CD4-positive, alpha-beta memory T cell (primary cell): ENCODE measurements at regions of chr17 and their contacts with region 1.

Region 1: GRCh38 chr17:65794572-65794971 is 233.1 kb upstream of the AXIN2 start:
- DNase-seq: peak in 4 of 5 donors; percentile 11 to 18 (median 13)
- H3K4me3 ChIP-seq: no peak overlapping the region
- H3K4me3 Mint-ChIP-seq: no peak overlapping the region
- H3K27ac ChIP-seq: no peak overlapping the region
- H3K27ac Mint-ChIP-seq: no peak overlapping the region
- H3K4me1 ChIP-seq: no peaks in the 10 kb centered on the region
- H3K4me1 Mint-ChIP-seq: no peaks in the 10 kb centered on the region
- H3K27me3 ChIP-seq: no peaks in the 10 kb centered on the region
- H3K27me3 Mint-ChIP-seq: no peaks in the 10 kb centered on the region

Region 2: GRCh38 chr17:65294179-65294720 is 500.3 kb before region 1 on chr17:
- CTCF ChIA-PET with region 1: interaction called, 69 read pairs
- POLR2A ChIA-PET with region 1: no interaction called
- intact Hi-C with region 1: loop called (anchors 1 kb)
- DNase-seq: peak; percentile 49 to 61 (median 55)
- H3K4me3 ChIP-seq: no peak overlapping the region
- H3K4me3 Mint-ChIP-seq: no peak overlapping the region
- H3K27ac ChIP-seq: no peak overlapping the region
- H3K27ac Mint-ChIP-seq: peak overlapping the region in 1 of 7 donors; percentile 7
- H3K4me1 ChIP-seq: no peaks in the 10 kb centered on the region
- H3K4me1 Mint-ChIP-seq: peaks cover 0 to 6% (median 4%) of the 10 kb centered on the region in 4 donors
- H3K27me3 ChIP-seq: no peaks in the 10 kb centered on the region
- H3K27me3 Mint-ChIP-seq: peaks cover 0 to 2% of the 10 kb centered on the region in 2 donors

Region 3: GRCh38 chr17:65455972-65456343 is 338.6 kb before region 1 on chr17:
- CTCF ChIA-PET with region 1: interaction called, 3 read pairs
- POLR2A ChIA-PET with region 1: no interaction called
- intact Hi-C with region 1: loop called (anchors 10 kb)
- DNase-seq: peak in 4 of 5 donors; percentile 26 to 40 (median 28)
- H3K4me3 ChIP-seq: no peak overlapping the region
- H3K4me3 Mint-ChIP-seq: peak overlapping the region in 1 of 8 donors; percentile 4
- H3K27ac ChIP-seq: no peak overlapping the region
- H3K27ac Mint-ChIP-seq: peak overlapping the region in 2 of 7 donors; percentile 10 to 42
- H3K4me1 ChIP-seq: peaks cover 3% of the 10 kb centered on the region
- H3K4me1 Mint-ChIP-seq: peaks cover 0 to 6% (median 2%) of the 10 kb centered on the region in 4 donors
- H3K27me3 ChIP-seq: no peaks in the 10 kb centered on the region
- H3K27me3 Mint-ChIP-seq: no peaks in the 10 kb centered on the region

Region 4: GRCh38 chr17:65813306-65813705 is 18.7 kb after region 1 on chr17:
- CTCF ChIA-PET with region 1: no interaction called
- POLR2A ChIA-PET with region 1: no interaction called
- intact Hi-C with region 1: no loop called
- DNase-seq: no peak
- H3K4me3 ChIP-seq: no peak overlapping the region
- H3K4me3 Mint-ChIP-seq: no peak overlapping the region
- H3K27ac ChIP-seq: no peak overlapping the region
- H3K27ac Mint-ChIP-seq: no peak overlapping the region
- H3K4me1 ChIP-seq: no peaks in the 10 kb centered on the region
- H3K4me1 Mint-ChIP-seq: no peaks in the 10 kb centered on the region
- H3K27me3 ChIP-seq: no peaks in the 10 kb centered on the region
- H3K27me3 Mint-ChIP-seq: peaks cover 1 to 6% of the 10 kb centered on the region in 2 donors